ENCODE measurements at regions of chrX and their contacts with region 1.

Region 1: GRCh38 chrX:77160301-77160700 is 286.9 kb upstream of the FGF16 start:
- DNase-seq: no peak
- H3K4me3 ChIP-seq: no peak overlapping the region
- H3K27ac ChIP-seq: no peak overlapping the region
- H3K4me1 ChIP-seq: no peaks in the 10 kb centered on the region
- H3K27me3 ChIP-seq: no peaks in the 10 kb centered on the region
- CTCF ChIP-seq: peak; percentile 32 to 51
- POLR2A ChIP-seq: no peak

Region 2: DNA sequence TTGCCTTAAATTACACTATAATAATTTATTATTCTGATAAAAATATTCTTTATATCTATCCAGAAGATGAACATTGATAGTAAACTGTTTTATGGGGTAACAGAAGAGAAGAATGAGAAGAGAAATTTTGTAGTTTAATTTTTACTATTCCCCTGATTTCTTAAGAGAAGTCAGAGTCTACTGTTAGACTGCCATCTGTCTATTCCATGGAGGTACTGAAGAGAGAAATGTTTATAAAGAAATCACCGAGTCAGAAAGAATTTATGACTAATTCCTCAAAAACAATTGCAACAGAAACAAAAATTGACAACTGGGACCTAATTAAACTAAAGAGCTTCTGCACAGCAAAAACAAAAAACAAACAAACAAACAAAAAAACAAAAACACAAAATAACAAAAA is 436.8 kb after region 1 on chrX:
- CTCF ChIA-PET with region 1: interaction called, 3 read pairs
- POLR2A ChIA-PET with region 1: no interaction called
- dilution Hi-C with region 1: no loop called
- intact Hi-C with region 1: loop called (anchors 2 kb)
- DNase-seq: peak; percentile 41
- H3K4me3 ChIP-seq: no peak overlapping the region
- H3K27ac ChIP-seq: no peak overlapping the region
- H3K4me1 ChIP-seq: no peaks in the 10 kb centered on the region
- H3K27me3 ChIP-seq: no peaks in the 10 kb centered on the region
- CTCF ChIP-seq: peak in 1 of 2 donors; percentile 14
- POLR2A ChIP-seq: no peak